ENCODE measurements at regions of chr10 and their contacts with region 1.

Region 1: GRCh38 chr10:62811159-62811875 is 4.8 kb downstream of the EGR2 start:
- DNase-seq: peak; percentile 93
- ATAC-seq: peak; percentile 48
- H3K4me3 Mint-ChIP-seq: peak overlapping the region; percentile 99
- H3K27ac Mint-ChIP-seq: peak overlapping the region; percentile 87
- H3K4me1 Mint-ChIP-seq: peaks cover 75% of the 10 kb centered on the region
- H3K27me3 Mint-ChIP-seq: no peaks in the 10 kb centered on the region

Region 2: GRCh38 chr10:62610649-62611229 is 200.6 kb before region 1 on chr10:
- CTCF ChIA-PET with region 1: interaction called, 51 read pairs
- POLR2A ChIA-PET with region 1: no interaction called
- intact Hi-C with region 1: loop called in 1 of 2 experiments (anchors 1 kb)
- DNase-seq: peak; percentile 87
- ATAC-seq: peak; percentile 79
- H3K4me3 Mint-ChIP-seq: no peak overlapping the region
- H3K27ac Mint-ChIP-seq: no peak overlapping the region
- H3K4me1 Mint-ChIP-seq: peaks cover 27% of the 10 kb centered on the region
- H3K27me3 Mint-ChIP-seq: peaks cover 14% of the 10 kb centered on the region

Region 3: GRCh38 chr10:62637249-62638061 is 173.9 kb before region 1 on chr10:
- CTCF ChIA-PET with region 1: no interaction called
- POLR2A ChIA-PET with region 1: interaction called, 15 read pairs
- intact Hi-C with region 1: loop called (anchors 1 kb)
- DNase-seq: peak; percentile 82
- ATAC-seq: peak; percentile 95
- H3K4me3 Mint-ChIP-seq: no peak overlapping the region
- H3K27ac Mint-ChIP-seq: no peak overlapping the region
- H3K4me1 Mint-ChIP-seq: peaks cover 21% of the 10 kb centered on the region
- H3K27me3 Mint-ChIP-seq: no peaks in the 10 kb centered on the region

Region 4: GRCh38 chr10:62779487-62780248 is 31.6 kb before region 1 on chr10:
- CTCF ChIA-PET with region 1: interaction called, 10 read pairs
- POLR2A ChIA-PET with region 1: interaction called, 7 read pairs
- intact Hi-C with region 1: loop called (anchors 1 kb)
- DNase-seq: peak; percentile 92
- ATAC-seq: peak; percentile 91
- H3K4me3 Mint-ChIP-seq: no peak overlapping the region
- H3K27ac Mint-ChIP-seq: peak overlapping the region; percentile 80
- H3K4me1 Mint-ChIP-seq: peaks cover 34% of the 10 kb centered on the region
- H3K27me3 Mint-ChIP-seq: peaks cover 4% of the 10 kb centered on the region